ENCODE measurements at regions of chr6 and their contacts with region 1.

Region 1: GRCh38 chr6:31827286-31828079 is at the start of gene HSPA1B:
- DNase-seq: peak; percentile 89

Region 2: GRCh38 chr6:31356946-31357466 is 470.5 kb before region 1 on chr6 and contains the start of gene HLA-B:
- CTCF ChIA-PET with region 1: no interaction called
- POLR2A ChIA-PET with region 1: no interaction called
- DNase-seq: peak; percentile 86

Region 3: GRCh38 chr6:31729515-31729978 is 97.9 kb before region 1 on chr6:
- CTCF ChIA-PET with region 1: interaction called, 5 read pairs
- POLR2A ChIA-PET with region 1: interaction called, 10 read pairs
- DNase-seq: peak; percentile 77

Region 4: DNA sequence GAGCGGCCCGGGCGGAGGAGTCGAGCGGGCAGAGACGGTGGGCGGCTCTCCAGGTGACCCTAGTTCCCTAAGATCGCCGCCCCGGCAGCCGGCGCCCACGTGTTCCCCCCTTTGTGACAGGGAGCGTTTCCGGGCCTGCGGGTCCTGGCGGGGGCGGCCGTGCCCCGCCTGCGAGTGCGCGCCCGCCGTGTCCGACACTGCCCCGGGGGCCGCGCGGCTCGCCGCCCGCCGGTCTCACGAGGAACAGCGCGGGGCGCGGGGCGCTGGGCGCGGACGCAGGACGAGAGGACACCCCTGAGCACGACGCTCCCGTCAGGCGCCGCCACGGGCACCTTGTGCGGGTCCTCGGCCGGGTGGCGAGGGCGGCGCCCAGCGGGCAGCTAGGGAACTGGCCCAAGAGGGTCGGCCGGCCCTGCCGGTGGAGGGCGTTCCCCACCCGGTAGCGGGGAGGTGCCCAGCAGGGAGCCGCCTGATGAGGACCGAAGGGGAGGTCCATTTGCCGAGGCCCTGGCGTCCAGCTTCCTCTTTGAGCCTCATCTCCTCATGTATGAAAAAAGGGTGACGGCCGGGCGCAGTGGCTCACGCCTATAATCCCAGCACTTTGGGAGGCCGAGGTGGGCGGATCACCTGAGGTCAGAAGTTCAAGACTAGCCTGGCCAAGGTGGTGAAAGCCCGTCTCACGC is 31.7 kb before region 1 on chr6 and contains the start of gene VARS1:
- CTCF ChIA-PET with region 1: interaction called, 7 read pairs
- POLR2A ChIA-PET with region 1: interaction called, 22 read pairs
- DNase-seq: peak; percentile 96

Region 5: DNA sequence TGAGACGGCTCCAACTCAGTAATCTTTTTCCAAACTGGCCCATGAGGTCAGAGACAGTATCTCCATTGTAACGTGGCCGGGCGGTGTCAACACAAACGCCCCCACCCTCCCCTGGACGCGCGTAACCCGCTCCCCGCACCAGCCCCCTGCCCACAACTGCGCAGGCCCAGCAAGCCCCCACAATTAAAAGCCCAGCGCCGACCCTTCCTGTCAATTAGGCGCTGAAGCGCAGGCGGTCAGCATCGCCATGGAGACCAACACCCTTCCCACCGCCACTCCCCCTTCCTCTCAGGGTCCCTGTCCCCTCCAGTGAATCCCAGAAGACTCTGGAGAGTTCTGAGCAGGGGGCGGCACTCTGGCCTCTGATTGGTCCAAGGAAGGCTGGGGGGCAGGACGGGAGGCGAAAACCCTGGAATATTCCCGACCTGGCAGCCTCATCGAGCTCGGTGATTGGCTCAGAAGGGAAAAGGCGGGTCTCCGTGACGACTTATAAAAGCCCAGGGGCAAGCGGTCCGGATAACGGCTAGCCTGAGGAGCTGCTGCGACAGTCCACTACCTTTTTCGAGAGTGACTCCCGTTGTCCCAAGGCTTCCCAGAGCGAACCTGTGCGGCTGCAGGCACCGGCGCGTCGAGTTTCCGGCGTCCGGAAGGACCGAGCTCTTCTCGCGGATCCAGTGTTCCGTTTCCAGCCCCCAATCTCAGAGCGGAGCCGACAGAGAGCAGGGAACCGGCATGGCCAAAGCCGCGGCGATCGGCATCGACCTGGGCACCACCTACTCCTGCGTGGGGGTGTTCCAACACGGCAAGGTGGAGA is 12.3 kb before region 1 on chr6 and contains the starts of genes HSPA1A and HSPA1L:
- CTCF ChIA-PET with region 1: interaction called, 6 read pairs
- POLR2A ChIA-PET with region 1: interaction called, 104 read pairs
- DNase-seq: no peak

Measured in HEK293T (cell line).